ENCODE measurements at regions of chr9 and their contacts with region 1.

Region 1: DNA sequence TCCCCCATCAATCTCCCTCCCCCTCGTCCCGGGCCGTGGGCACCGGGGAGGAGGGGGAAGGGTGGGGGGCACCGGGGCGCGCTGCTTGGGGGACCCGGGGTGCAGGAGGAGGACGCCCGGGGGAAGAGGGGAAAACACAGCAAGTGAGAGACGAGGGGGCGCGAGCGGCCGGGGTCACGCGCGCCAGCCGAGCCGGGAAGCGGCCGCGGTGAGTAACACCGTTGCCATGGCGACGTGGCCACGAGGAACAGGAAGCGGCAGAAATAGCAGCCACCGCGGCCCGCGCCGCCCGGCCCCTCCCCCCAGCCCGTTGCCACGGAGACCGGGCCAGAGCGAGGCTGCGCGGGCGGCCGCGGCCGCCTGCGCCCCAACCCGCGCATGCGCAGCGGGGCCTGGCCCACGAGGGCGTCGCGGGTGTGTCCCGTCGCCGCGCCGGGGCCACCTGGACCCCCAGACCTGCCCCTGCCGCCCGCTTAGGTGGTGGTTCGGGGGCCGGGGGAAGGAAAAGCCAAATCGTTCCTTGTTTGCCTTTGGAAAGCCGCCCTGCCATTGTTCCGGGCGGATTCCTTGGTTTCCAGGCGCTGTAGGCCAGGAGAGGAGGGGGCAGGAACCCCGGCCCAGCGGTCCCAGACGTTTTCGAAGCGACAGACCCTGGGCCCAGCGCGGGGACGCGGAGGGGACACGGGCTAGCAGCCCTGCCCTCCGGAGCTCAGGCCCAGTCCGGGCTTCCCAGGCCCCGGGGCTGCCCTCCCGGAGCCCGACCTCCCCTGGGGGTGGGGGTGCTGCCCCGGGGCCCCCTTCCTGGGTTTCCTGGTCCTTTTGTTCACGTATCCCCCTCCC is 207.1 kb downstream of the C9orf50 start:
- DNase-seq: peak; percentile 95
- H3K4me3 ChIP-seq: peak overlapping the region in 1 of 3 experiments; percentile 35
- H3K27ac ChIP-seq: peak overlapping the region; percentile 96
- H3K4me1 ChIP-seq: peaks cover 15% of the 10 kb centered on the region
- H3K27me3 ChIP-seq: no peaks in the 10 kb centered on the region
- CTCF ChIP-seq: no peak
- POLR2A ChIP-seq: peak; percentile 70

Region 2: GRCh38 chr9:129383561-129384416 is 30.0 kb before region 1 on chr9:
- CTCF ChIA-PET with region 1: no interaction called
- POLR2A ChIA-PET with region 1: no interaction called
- dilution Hi-C with region 1: no loop called
- intact Hi-C with region 1: loop called (anchors 2 kb)
- DNase-seq: peak; percentile 47
- H3K4me3 ChIP-seq: peak overlapping the region; percentile 16 to 44 (median 38)
- H3K27ac ChIP-seq: no peak overlapping the region
- H3K4me1 ChIP-seq: peaks cover 2% of the 10 kb centered on the region
- H3K27me3 ChIP-seq: no peaks in the 10 kb centered on the region
- CTCF ChIP-seq: no peak
- POLR2A ChIP-seq: peak; percentile 29

Region 3: DNA sequence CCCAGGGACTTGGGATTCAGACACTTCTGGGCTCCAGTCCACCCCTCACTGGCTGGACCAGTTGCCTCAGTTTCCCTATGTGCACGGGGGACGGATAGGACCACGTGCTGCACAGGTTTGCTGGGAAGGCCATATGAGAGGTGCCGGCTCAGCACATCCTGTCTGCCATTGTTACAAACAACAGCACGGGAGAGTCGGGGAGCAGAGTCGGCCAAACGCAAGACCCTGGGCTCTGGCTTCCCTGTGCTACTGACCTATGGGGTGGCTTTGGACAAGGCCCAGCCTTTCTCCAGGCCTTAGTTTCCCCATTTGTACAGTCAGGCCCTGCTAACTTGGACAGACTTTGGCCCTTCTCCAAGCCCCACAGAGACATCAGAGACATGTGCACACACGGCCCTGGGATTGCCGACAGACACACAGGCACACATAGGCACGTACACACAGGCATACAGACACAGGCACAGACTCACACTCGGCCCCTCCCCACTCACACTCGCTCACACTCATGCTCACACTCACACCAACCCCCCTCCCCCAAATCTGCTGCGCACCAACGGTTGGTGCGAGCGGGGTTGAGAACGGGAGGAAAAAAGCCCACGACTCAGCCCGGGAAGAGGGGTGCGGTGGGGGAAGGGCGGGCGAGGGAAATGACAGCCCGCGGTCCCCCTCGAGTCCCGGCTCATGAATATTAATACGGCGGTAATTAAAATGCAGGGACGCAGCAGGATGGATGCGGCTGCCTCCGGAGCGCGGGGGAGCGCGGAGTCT is 74.1 kb after region 1 on chr9:
- CTCF ChIA-PET with region 1: no interaction called
- POLR2A ChIA-PET with region 1: no interaction called
- dilution Hi-C with region 1: no loop called
- intact Hi-C with region 1: loop called (anchors 2 kb)
- DNase-seq: peak; percentile 67
- H3K4me3 ChIP-seq: peak overlapping the region in 1 of 3 experiments; percentile 30
- H3K27ac ChIP-seq: peak overlapping the region; percentile 66
- H3K4me1 ChIP-seq: peaks cover 55% of the 10 kb centered on the region
- H3K27me3 ChIP-seq: no peaks in the 10 kb centered on the region
- CTCF ChIP-seq: no peak
- POLR2A ChIP-seq: peak; percentile 58